ENCODE measurements at regions of chr1 and their contacts with region 1.

Region 1: DNA sequence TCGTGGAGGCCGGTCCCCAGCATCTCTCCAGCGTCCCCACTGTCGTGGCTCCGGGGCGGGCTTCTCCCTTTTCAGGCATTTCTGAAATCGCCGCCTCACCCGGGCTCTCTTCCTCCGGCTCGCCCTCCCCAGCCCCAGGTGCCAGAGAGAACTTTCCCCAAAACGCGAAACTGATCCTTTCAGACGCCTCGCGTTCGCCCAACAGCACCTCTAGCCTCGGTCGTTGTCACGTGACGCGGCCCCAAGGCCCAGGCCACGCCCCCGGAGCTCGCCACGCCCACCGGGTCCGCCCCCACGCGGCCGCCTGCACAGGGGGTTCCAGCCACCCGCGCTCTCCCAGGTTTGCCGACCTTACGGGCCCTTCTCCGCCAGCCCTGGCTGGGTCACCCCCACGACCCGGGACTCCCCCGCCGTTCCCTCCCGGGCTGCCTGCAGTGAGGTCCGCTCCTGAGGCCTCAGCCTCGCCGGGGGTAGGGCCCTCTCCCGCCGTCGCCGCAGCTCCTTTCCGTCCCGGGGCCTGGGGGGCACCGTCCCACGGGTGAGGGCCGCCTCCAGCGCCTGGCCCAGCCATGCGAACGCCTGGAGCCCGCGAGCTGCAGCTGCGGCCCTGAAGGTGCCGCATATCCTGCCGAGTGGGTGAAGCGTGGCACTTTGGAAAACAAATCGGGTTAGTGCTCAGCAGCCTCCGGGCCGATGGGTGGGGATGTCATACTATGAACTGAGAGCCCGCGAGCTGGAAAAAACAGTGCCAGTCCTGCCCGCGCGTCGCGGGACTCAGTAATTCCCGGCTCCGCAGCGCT is 21.0 kb downstream of the H3-3A start:
- DNase-seq: peak; percentile 80 to 97 (median 93)
- ATAC-seq: peak; percentile 97
- H3K4me3 ChIP-seq: peak overlapping the region; percentile 78 to 79
- H3K4me3 Mint-ChIP-seq: peak overlapping the region; percentile 90
- H3K27ac ChIP-seq: peak overlapping the region in 1 of 2 experiments; percentile 15
- H3K27ac Mint-ChIP-seq: peak overlapping the region; percentile 81
- H3K4me1 ChIP-seq: peaks cover 10% of the 10 kb centered on the region
- H3K4me1 Mint-ChIP-seq: peaks cover 11% of the 10 kb centered on the region
- H3K27me3 ChIP-seq: no peaks in the 10 kb centered on the region
- H3K27me3 Mint-ChIP-seq: no peaks in the 10 kb centered on the region
- CTCF ChIP-seq: no peak

Region 2: DNA sequence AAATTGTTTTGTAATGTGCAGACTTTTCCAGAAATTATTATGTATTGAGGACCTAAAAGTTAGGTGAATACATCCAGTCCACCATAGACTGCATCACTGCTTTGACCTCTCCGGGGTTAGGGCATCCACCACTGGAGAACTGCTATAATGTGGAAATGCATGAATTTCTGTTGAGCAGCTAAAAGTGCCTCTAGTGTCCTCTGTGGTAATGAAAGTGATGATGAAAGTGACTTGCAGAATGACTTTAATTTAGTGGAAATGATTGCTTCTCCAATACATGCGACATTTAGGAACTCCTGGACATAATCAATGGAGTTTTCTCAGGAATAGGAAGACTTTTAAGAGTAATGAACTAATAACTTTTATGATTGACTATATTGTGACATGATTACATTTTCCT is 826.4 kb before region 1 on chr1:
- CTCF ChIA-PET with region 1: no interaction called
- POLR2A ChIA-PET with region 1: no interaction called
- intact Hi-C with region 1: no loop called
- DNase-seq: no peak
- ATAC-seq: no peak
- H3K4me3 ChIP-seq: no peak overlapping the region
- H3K4me3 Mint-ChIP-seq: no peak overlapping the region
- H3K27ac ChIP-seq: no peak overlapping the region
- H3K27ac Mint-ChIP-seq: no peak overlapping the region
- H3K4me1 ChIP-seq: no peaks in the 10 kb centered on the region
- H3K4me1 Mint-ChIP-seq: no peaks in the 10 kb centered on the region
- H3K27me3 ChIP-seq: no peaks in the 10 kb centered on the region
- H3K27me3 Mint-ChIP-seq: peaks cover 6% of the 10 kb centered on the region
- CTCF ChIP-seq: no peak

Region 3: DNA sequence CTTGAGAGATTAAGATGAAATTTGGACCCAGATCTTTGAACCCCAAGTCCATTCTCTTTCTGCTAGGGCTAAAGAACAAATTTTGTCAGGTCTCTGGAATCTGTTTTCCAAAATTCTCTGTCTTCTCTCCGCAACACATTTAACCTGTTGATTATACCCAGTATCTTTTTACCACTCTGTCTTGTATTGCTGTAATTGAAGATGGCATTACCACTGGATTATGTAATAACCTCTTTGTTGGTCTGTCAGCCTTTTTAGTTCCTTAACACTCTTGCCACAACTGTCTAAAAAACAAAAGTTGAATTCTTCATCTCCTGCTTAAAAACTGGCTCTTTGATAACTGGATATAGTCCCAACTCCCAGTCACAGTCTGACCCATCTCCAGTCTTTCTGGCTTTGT is 302.9 kb before region 1 on chr1:
- CTCF ChIA-PET with region 1: no interaction called
- POLR2A ChIA-PET with region 1: no interaction called
- intact Hi-C with region 1: no loop called
- DNase-seq: peak in 1 of 9 experiments; percentile 13
- ATAC-seq: no peak
- H3K4me3 ChIP-seq: no peak overlapping the region
- H3K4me3 Mint-ChIP-seq: peak overlapping the region; percentile 45
- H3K27ac ChIP-seq: peak overlapping the region in 1 of 2 experiments; percentile 21
- H3K27ac Mint-ChIP-seq: peak overlapping the region; percentile 42
- H3K4me1 ChIP-seq: peaks cover 65% of the 10 kb centered on the region
- H3K4me1 Mint-ChIP-seq: peaks cover 47% of the 10 kb centered on the region
- H3K27me3 ChIP-seq: no peaks in the 10 kb centered on the region
- H3K27me3 Mint-ChIP-seq: no peaks in the 10 kb centered on the region
- CTCF ChIP-seq: no peak

Region 4: DNA sequence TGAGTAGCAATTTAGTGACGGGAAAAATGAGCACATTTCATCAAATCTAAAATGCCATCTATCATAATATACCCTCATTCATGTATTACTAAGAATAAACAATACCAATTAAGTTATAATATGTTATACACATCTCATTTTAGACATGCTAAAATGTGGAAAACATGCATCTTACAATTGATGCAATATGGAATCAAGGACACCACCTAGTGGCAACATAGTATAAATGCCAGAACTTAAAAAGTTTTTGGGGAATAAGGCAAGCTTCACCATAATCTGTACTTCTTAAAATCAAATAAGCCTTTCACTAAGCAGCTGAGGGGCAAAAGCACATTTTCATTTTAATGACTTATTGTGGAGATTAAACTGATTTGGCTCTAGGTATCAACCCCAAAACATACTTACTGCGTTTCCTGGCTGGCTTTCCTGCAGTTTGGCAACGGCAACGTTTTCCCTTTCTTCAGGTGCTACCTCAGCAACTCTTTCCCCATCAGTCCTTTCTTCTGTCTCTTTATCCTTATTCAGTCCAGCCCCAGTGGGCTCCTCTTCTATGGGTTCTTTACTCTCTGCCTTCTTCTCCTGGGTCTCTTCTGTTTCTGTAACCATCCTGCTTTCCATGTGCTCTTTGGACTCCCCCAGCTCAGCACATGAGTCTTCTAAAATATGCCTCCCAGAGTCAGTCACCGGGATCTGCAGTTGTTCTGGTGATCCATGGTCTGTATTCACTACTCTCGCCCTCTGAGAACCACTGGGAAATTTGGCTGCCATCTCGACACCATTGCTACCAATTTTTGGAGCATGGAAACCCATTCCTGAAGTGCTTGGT is 95.8 kb before region 1 on chr1:
- CTCF ChIA-PET with region 1: no interaction called
- POLR2A ChIA-PET with region 1: no interaction called
- intact Hi-C with region 1: no loop called
- DNase-seq: peak in 2 of 9 experiments; percentile 53 to 66
- ATAC-seq: peak; percentile 79
- H3K4me3 ChIP-seq: no peak overlapping the region
- H3K4me3 Mint-ChIP-seq: no peak overlapping the region
- H3K27ac ChIP-seq: no peak overlapping the region
- H3K27ac Mint-ChIP-seq: peak overlapping the region; percentile 30
- H3K4me1 ChIP-seq: peaks cover 9% of the 10 kb centered on the region
- H3K4me1 Mint-ChIP-seq: peaks cover 28% of the 10 kb centered on the region
- H3K27me3 ChIP-seq: no peaks in the 10 kb centered on the region
- H3K27me3 Mint-ChIP-seq: no peaks in the 10 kb centered on the region
- CTCF ChIP-seq: peak; percentile 74

Region 5: DNA sequence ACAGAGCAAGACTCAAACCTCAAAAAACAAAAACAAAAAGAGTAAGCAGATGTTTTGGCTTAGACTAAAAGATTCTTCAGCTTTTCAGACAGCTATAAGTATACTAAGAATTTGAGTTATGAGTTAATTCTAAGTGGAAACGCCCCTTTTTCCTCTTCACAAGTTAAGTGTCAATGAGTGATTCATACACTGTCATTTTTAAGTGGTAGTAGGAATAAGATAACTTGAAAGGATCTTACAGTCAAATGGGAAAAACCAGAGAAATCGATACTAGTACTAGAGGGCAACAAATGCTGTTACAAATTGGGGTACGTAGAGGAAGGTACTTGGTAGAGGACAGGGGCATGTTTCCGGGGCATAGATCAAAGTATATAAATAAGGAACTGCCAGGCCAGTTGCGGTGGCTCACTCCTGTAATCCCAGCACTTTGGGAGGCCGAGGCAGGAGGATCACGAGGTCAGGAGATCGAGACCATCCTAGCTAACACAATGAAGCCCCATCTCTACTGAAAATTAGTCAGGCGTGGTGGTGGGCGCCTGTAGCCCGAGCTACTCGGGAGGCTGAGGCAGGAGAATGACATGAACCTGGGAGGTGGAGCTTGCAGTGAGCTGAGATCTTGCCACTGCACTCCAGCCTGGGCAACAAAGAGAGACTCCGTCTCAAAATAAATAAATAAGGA is 13.6 kb before region 1 on chr1:
- CTCF ChIA-PET with region 1: interaction called, 30 read pairs
- POLR2A ChIA-PET with region 1: interaction called, 35 read pairs
- intact Hi-C with region 1: no loop called
- DNase-seq: no peak
- ATAC-seq: no peak
- H3K4me3 ChIP-seq: no peak overlapping the region
- H3K4me3 Mint-ChIP-seq: peak overlapping the region; percentile 44
- H3K27ac ChIP-seq: peak overlapping the region in 1 of 2 experiments; percentile 1
- H3K27ac Mint-ChIP-seq: peak overlapping the region; percentile 68
- H3K4me1 ChIP-seq: peaks cover 59% of the 10 kb centered on the region
- H3K4me1 Mint-ChIP-seq: peaks cover 63% of the 10 kb centered on the region
- H3K27me3 ChIP-seq: no peaks in the 10 kb centered on the region
- H3K27me3 Mint-ChIP-seq: no peaks in the 10 kb centered on the region
- CTCF ChIP-seq: no peak

Region 6: DNA sequence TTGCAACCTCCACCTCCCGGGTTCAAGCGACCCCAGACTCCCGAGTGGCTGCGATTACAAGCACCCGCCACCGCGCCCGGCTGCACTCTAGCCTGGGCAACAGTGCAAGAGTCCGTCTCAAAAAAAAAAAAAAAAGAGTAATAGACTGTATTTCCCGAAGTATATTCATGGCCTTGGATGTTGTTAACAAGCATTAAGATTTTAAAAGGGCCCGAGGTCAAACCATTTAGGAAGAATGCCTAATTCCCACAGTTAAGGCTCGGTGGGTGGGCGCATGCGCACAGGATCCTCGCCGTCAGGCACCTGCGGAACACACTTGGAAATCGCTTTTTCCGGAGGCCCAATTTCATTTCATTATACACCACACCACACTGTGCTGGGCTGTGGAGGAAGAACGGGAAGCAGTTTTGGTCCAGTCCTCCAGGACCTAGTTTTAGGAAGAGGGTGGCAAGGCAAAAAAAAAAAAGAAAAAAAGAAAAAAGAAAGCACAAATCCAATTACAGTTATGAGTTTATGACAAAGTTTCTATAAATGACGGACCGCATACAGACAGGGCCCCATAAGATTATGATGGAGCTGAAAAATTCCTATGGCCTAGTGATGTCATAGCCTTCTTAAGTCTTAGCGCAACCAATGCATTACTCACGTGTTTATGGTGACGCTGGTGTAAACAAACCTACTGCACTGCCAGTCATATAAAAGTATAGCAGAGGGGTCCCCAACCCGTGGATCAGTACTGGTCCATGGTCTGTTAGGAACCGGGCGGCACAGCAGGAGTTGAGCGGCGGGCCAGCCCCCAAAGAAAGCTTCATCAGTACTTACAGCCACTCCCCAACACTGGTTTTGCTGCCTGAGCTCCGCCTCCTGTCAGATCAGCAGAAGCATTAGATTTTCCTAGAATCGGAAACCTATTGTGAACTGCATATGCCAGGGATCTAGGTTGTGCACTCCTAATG is 17.2 kb after region 1 on chr1:
- CTCF ChIA-PET with region 1: no interaction called
- POLR2A ChIA-PET with region 1: interaction called, 3 read pairs
- intact Hi-C with region 1: loop called in 1 of 2 experiments (anchors 2 kb)
- DNase-seq: peak in 7 of 9 experiments; percentile 29 to 63 (median 53)
- ATAC-seq: peak; percentile 72
- H3K4me3 ChIP-seq: peak overlapping the region; percentile 50 to 53
- H3K4me3 Mint-ChIP-seq: peak overlapping the region; percentile 87
- H3K27ac ChIP-seq: no peak overlapping the region
- H3K27ac Mint-ChIP-seq: peak overlapping the region; percentile 77
- H3K4me1 ChIP-seq: peaks cover 4% of the 10 kb centered on the region
- H3K4me1 Mint-ChIP-seq: peaks cover 15% of the 10 kb centered on the region
- H3K27me3 ChIP-seq: no peaks in the 10 kb centered on the region
- H3K27me3 Mint-ChIP-seq: no peaks in the 10 kb centered on the region
- CTCF ChIP-seq: no peak

Region 7: DNA sequence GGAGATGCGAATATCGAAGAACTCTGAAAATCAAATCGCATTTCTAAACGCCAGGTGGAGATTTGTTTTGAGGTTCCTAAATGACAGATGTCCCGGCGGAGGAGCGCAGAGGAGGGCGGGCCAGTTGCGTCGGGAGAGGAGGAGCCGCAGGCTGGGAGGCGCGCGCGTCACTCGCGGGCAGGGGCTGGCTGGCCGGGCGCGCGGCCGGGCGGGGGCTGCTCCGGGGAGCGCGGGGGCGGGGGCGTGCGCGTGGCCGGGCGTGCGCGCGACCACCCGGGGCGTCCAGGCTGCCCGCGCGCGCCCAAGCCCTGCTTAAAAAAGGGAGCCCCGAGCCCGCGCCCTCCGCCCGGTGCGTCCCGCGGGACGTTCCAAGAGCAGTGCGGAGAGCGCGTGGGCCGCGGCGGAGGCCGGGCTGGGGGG is 26.3 kb after region 1 on chr1:
- CTCF ChIA-PET with region 1: no interaction called
- POLR2A ChIA-PET with region 1: interaction called, 12 read pairs
- intact Hi-C with region 1: loop called in 1 of 2 experiments (anchors 1 kb)
- DNase-seq: peak; percentile 49 to 89 (median 76)
- ATAC-seq: peak; percentile 85
- H3K4me3 ChIP-seq: peak overlapping the region; percentile 54 to 63
- H3K4me3 Mint-ChIP-seq: peak overlapping the region; percentile 94
- H3K27ac ChIP-seq: peak overlapping the region; percentile 52 to 74
- H3K27ac Mint-ChIP-seq: peak overlapping the region; percentile 88
- H3K4me1 ChIP-seq: peaks cover 11% of the 10 kb centered on the region
- H3K4me1 Mint-ChIP-seq: peaks cover 18% of the 10 kb centered on the region
- H3K27me3 ChIP-seq: no peaks in the 10 kb centered on the region
- H3K27me3 Mint-ChIP-seq: no peaks in the 10 kb centered on the region
- CTCF ChIP-seq: no peak